ENCODE measurements at regions of chr3 and their contacts with region 1.

Region 1: DNA sequence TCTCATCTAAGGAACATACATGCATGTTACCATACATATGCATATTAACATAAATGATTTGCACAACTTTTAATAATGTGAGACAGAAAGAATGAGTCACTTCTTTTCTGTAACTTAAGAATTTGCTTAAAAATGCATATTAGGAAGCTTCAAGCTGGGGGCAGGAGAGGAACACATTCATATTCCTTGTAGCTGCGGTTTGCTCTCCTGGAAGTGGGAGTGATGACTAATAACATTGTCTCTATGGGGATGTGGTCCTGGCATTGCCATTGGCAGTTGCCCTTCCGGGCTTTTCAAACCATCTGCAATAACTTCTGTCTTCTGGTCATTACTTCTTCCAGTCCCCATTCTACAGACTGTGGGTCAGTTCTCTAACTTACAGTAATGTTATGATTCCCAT is 15.6 kb downstream of the CHST2 start:
- ATAC-seq: peak; percentile 28 to 90 (median 74)
- H3K4me3 ChIP-seq: no peak overlapping the region
- H3K27ac ChIP-seq: no peak overlapping the region
- H3K4me1 ChIP-seq: peaks cover 0 to 4% of the 10 kb centered on the region in 2 donors

Region 2: GRCh38 chr3:143302638-143303171 is 167.6 kb after region 1 on chr3:
- in situ Hi-C with region 1: loop called in 2 of 9 experiments (anchors 25 kb)
- ATAC-seq: peak in 2 of 8 experiments; percentile 84 to 91
- H3K4me3 ChIP-seq: no peak overlapping the region
- H3K27ac ChIP-seq: no peak overlapping the region
- H3K4me1 ChIP-seq: no peaks in the 10 kb centered on the region

Region 3: DNA sequence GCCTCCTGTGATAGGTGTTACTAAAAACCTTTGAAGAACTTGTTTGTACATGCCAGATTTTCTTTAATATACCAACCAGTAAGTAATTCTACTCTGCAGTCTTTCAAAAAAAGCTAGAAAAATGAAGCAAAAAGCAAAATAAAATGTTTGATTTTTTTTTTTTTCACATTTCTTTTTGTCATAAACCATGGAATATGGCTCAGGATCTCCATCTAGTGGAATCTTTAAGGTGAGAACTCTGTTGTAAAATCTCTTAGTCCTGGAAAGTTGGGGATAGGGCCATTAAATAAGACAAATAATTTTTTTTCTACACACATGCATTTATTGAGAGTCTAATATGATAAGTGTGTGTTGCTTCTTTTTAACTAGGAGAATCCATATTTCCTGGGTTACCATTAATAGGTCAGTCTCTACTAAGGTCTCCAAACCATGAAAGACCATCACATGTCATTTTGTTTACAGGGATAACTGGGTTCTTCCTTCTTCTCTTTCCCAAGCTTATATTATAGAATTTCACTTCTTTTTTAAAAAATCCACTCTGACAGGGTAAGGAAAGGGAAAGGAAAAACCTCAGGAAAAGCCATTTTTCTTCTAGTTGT is 628.5 kb after region 1 on chr3:
- in situ Hi-C with region 1: loop called in 1 of 9 experiments (anchors 25 kb)
- ATAC-seq: peak in 3 of 8 experiments; percentile 30 to 39 (median 31)
- H3K4me3 ChIP-seq: no peak overlapping the region
- H3K27ac ChIP-seq: no peak overlapping the region
- H3K4me1 ChIP-seq: no peaks in the 10 kb centered on the region

Measured in motor neuron (in vitro differentiated cells).